Aorta (tissue), 5 donors: ENCODE measurements at regions of chr15 and their contacts with region 1.

Region 1: DNA sequence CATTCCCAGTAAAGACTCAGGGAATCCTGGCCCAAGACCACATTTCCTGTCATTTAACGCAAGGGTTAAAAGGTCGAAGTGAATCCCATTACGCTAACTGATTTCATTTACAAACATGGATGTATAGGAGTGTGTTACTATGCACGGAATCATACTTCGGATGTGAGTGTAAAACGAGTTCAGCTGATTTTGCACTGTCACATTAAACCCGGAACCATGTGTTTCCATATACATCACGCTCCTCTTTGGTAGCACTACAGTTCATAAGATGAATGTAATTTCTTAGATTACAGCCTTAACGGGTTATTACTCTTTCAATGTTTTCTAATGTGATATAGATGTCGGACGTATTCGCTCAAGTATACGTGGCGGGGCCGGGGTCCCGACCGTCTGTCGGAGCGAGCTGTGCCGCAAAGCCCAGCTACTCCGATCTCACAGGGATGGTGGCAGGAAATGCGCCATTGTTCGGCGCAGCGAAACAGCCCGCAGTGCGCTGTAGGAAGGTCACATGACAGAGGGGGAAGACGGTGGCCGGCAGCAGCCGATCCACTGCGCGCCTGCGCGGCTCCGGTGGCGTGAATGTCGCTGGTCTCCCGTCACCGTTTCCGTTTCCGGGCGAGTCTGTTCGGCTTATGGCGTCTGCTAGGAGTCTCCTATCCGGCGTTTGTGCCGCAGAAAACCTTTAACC is 97.3 kb downstream of the NPAP1 start:
- DNase-seq: peak; percentile 82 to 89
- ATAC-seq: peak; percentile 90
- H3K4me3 ChIP-seq: peak overlapping the region; percentile 28 to 63
- H3K27ac ChIP-seq: no peak overlapping the region
- H3K4me1 ChIP-seq: no peaks in the 10 kb centered on the region
- H3K27me3 ChIP-seq: no peaks in the 10 kb centered on the region

Region 2: GRCh38 chr15:24848050-24848449 is 75.2 kb after region 1 on chr15:
- intact Hi-C with region 1: loop called in 1 of 2 experiments (anchors 10 kb)
- DNase-seq: peak in 1 of 2 donors; percentile 56
- ATAC-seq: no peak
- H3K4me3 ChIP-seq: no peak overlapping the region
- H3K27ac ChIP-seq: no peak overlapping the region
- H3K4me1 ChIP-seq: no peaks in the 10 kb centered on the region
- H3K27me3 ChIP-seq: no peaks in the 10 kb centered on the region

Region 3: DNA sequence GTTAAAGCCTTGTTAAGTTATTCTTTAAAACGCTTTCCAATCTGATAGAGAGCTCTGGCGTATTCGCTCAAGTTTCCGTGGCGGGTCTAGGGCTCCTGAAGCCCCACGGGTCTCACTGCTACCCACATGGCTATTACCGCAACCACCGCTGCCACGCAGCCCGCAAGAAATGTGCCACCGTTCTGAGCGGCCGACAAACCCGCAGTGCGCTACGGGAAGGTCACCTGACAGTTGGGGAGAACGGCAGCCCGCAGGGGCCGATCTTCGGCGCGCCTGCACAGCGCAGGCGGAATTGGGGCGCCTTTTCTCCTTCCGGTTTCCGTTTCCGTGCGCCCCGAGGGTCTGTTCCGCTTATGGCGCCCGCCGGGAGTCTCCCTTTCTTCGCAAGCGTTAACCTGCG is 105.3 kb after region 1 on chr15:
- intact Hi-C with region 1: no loop called
- DNase-seq: peak; percentile 61 to 78
- ATAC-seq: peak; percentile 57
- H3K4me3 ChIP-seq: peak overlapping the region; percentile 3 to 4
- H3K27ac ChIP-seq: no peak overlapping the region
- H3K4me1 ChIP-seq: no peaks in the 10 kb centered on the region
- H3K27me3 ChIP-seq: no peaks in the 10 kb centered on the region